CD4-positive, alpha-beta memory T cell (primary cell): ENCODE measurements at regions of chr3 and their contacts with region 1.

Region 1: GRCh38 chr3:184298759-184299496 is at the start of gene PSMD2:
- DNase-seq: peak; percentile 96 to 97 (median 96)
- H3K4me3 ChIP-seq: peak within 1 kb of the TSS; percentile 68 to 85
- H3K4me3 Mint-ChIP-seq: peak within 1 kb of the TSS; percentile 88 to 96 (median 94)
- H3K27ac ChIP-seq: peak within 1 kb of the TSS; percentile 73
- H3K27ac Mint-ChIP-seq: peak within 1 kb of the TSS; percentile 90 to 95 (median 94)
- H3K4me1 ChIP-seq: peaks cover 14% of the 10 kb centered on the region
- H3K4me1 Mint-ChIP-seq: peaks cover 14 to 35% (median 21%) of the 10 kb centered on the region in 4 donors
- H3K27me3 ChIP-seq: no peaks in the 10 kb centered on the region
- H3K27me3 Mint-ChIP-seq: no peaks in the 10 kb centered on the region
- total RNA-seq, gene PSMD2: 148 to 154 TPM

Region 2: DNA sequence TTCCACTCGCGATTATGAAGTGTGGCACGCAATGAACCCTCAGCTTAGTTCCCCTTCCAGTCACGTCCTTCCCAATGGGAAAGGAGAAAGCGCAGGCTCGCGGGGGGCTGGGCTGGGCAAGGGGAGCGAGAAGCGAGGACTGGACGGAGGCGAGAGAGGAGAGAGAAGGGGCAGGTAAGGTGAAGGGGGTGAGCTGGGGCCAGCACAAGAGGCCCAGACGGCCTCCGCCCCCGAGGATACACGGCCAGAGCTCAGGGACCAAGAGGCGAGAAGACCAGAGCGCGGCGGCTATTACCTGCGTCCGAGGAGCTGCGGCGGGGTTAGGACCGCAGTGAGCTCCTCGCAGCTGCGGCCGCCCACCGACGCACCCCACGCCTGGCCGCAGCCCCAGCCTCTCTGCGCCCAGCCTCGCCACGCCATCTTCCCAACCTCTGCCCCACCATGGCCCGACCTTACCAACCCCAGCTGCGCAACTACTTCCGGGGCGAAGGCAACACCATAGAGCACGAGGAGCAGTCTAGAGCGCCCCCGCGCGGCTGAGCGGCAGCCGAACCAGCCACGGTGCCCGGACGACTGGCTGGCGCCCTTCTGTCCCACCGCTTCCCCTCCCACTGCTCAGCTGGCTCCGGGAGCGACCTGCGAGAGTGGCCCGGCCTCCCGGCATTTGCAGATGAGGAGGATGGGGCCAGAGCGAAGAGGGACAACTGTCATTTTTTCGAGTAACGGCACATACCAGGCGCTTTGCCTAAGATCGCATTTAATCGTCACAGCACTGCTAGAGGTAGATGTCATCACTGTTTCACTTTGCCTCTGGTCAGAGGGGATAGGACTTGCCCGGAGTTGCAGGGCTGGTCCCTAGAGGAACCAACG is 414.3 kb before region 1 on chr3 and contains the start of gene PARL:
- CTCF ChIA-PET with region 1: no interaction called
- POLR2A ChIA-PET with region 1: no interaction called
- intact Hi-C with region 1: loop called (anchors 5 kb)
- DNase-seq: peak; percentile 93 to 95 (median 94)
- H3K4me3 ChIP-seq: peak within 1 kb of the TSS; percentile 85 to 95
- H3K4me3 Mint-ChIP-seq: peak within 1 kb of the TSS; percentile 92 to 98 (median 95)
- H3K27ac ChIP-seq: peak within 1 kb of the TSS; percentile 74
- H3K27ac Mint-ChIP-seq: peak within 1 kb of the TSS; percentile 88 to 96 (median 93)
- H3K4me1 ChIP-seq: peaks cover 28% of the 10 kb centered on the region
- H3K4me1 Mint-ChIP-seq: peaks cover 24 to 50% (median 34%) of the 10 kb centered on the region in 4 donors
- H3K27me3 ChIP-seq: no peaks in the 10 kb centered on the region
- H3K27me3 Mint-ChIP-seq: no peaks in the 10 kb centered on the region
- total RNA-seq, gene PARL: 46.9 to 50.2 TPM

Region 3: DNA sequence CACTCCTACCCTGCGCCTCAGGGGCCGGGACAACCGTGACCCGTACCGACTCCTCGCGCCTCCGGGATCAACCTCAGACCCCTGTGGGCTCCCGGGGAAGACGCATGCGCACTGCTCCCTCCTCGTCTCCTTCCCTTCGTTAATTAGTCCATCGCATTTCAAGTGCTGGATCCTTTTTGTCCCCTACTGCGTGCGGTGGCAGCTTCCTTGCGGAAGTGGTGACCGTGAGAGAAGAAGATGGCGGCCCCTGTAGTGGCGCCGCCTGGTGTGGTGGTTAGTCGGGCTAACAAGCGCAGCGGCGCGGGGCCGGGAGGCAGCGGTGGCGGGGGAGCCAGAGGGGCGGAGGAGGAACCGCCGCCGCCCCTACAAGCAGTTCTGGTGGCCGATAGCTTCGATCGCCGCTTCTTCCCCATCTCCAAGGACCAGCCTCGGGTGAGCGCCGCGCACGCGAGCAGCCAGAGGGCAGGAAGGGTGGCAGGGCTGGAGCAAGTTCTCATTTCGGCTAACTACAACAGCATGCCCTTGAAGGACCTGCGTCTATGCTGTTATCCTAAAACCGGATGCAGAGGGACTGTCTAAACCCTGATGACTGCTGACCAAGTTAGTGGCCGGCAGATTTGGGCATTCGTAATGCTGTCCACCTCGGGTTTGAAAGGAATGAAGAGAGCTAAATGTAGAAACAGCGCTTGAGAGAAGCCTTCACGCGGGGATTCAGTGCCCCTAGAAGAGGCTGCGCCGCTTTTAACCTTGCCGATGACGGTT is 163.6 kb before region 1 on chr3 and contains the start of gene EIF2B5:
- CTCF ChIA-PET with region 1: no interaction called
- POLR2A ChIA-PET with region 1: no interaction called
- intact Hi-C with region 1: loop called (anchors 1 kb)
- DNase-seq: peak; percentile 85 to 90 (median 86)
- H3K4me3 ChIP-seq: peak within 1 kb of the TSS; percentile 95 to 96
- H3K4me3 Mint-ChIP-seq: peak within 1 kb of the TSS; percentile 95 to 99 (median 98)
- H3K27ac ChIP-seq: peak within 1 kb of the TSS; percentile 78
- H3K27ac Mint-ChIP-seq: peak within 1 kb of the TSS; percentile 90 to 98 (median 97)
- H3K4me1 ChIP-seq: peaks cover 28% of the 10 kb centered on the region
- H3K4me1 Mint-ChIP-seq: peaks cover 23 to 49% (median 33%) of the 10 kb centered on the region in 4 donors
- H3K27me3 ChIP-seq: no peaks in the 10 kb centered on the region
- H3K27me3 Mint-ChIP-seq: no peaks in the 10 kb centered on the region
- total RNA-seq, gene EIF2B5: 82.3 to 87.6 TPM

Region 4: DNA sequence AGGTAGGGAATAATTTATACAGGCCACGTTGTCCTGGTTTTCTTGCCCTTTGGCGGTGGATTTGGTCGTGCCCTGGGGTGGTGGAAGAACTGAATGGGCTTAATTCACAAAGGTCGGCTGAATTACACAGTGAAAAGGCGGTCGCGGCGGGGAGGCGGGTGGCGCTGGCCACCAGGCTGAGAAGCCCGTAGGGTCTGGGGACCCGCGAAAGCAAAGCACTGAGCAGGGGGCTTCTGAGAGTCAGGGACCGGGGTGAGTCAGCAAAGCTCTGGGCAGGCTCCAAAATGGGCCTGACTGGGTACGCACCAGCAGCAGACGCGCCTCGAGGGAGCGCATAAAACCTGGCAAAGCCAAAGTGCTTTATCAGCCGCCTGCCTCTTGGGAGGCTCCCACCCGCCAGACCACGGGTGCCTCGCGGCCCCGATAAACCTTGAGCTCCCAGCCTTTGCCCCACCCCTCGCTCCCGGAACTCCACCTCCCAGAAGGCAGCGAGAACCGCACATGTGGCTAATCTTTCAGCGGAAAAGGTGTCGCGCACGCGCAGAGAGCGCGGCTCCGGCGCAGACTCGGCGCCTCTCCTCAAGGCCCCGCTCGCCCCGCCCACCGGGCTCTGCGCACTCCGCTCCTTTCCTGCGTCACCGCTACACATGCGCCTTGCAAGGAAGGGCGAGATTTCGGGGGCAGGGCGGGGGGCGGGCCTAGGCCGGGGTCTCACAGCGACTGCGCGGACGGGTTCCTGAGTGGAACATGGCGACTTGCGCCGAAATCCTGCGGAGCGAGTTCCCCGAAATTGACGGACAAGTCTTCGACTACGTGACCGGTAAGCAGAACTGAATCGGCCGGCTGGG is 113.2 kb before region 1 on chr3 and contains the start of gene ABCF3:
- CTCF ChIA-PET with region 1: no interaction called
- POLR2A ChIA-PET with region 1: interaction called, 4 read pairs
- intact Hi-C with region 1: loop called (anchors 1 kb)
- DNase-seq: peak; percentile 98 to 100 (median 99)
- H3K4me3 ChIP-seq: peak within 1 kb of the TSS; percentile 87 to 98
- H3K4me3 Mint-ChIP-seq: peak within 1 kb of the TSS; percentile 98 to 99 (median 98)
- H3K27ac ChIP-seq: peak within 1 kb of the TSS; percentile 80
- H3K27ac Mint-ChIP-seq: peak within 1 kb of the TSS; percentile 92 to 99 (median 97)
- H3K4me1 ChIP-seq: peaks cover 30% of the 10 kb centered on the region
- H3K4me1 Mint-ChIP-seq: peaks cover 26 to 47% (median 36%) of the 10 kb centered on the region in 4 donors
- H3K27me3 ChIP-seq: no peaks in the 10 kb centered on the region
- H3K27me3 Mint-ChIP-seq: no peaks in the 10 kb centered on the region
- total RNA-seq, gene ABCF3: 122 to 124 TPM

Region 5: DNA sequence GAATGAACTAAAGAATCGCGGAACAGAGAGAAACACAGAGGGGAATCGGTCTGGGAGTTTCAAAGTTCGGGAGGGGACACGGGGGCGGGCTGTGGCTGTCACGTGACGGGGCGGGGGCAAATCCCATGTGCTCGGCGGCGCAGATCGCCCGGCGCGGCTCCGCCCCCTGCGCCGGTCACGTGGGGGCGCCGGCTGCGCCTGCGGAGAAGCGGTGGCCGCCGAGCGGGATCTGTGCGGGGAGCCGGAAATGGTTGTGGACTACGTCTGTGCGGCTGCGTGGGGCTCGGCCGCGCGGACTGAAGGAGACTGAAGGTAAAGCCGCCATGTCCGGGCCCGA is 15.4 kb after region 1 on chr3 and contains the start of gene EIF4G1:
- CTCF ChIA-PET with region 1: interaction called, 3 read pairs
- POLR2A ChIA-PET with region 1: interaction called, 13 read pairs
- intact Hi-C with region 1: loop called (anchors 1 kb)
- DNase-seq: peak; percentile 91 to 93 (median 93)
- H3K4me3 ChIP-seq: peak within 1 kb of the TSS; percentile 65 to 67
- H3K4me3 Mint-ChIP-seq: peak within 1 kb of the TSS; percentile 80 to 93 (median 90)
- H3K27ac ChIP-seq: peak within 1 kb of the TSS; percentile 92
- H3K27ac Mint-ChIP-seq: peak within 1 kb of the TSS; percentile 93 to 97 (median 96)
- H3K4me1 ChIP-seq: peaks cover 37% of the 10 kb centered on the region
- H3K4me1 Mint-ChIP-seq: peaks cover 25 to 42% (median 28%) of the 10 kb centered on the region in 4 donors
- H3K27me3 ChIP-seq: no peaks in the 10 kb centered on the region
- H3K27me3 Mint-ChIP-seq: no peaks in the 10 kb centered on the region
- total RNA-seq, gene EIF4G1: 236 to 246 TPM

Region 6: DNA sequence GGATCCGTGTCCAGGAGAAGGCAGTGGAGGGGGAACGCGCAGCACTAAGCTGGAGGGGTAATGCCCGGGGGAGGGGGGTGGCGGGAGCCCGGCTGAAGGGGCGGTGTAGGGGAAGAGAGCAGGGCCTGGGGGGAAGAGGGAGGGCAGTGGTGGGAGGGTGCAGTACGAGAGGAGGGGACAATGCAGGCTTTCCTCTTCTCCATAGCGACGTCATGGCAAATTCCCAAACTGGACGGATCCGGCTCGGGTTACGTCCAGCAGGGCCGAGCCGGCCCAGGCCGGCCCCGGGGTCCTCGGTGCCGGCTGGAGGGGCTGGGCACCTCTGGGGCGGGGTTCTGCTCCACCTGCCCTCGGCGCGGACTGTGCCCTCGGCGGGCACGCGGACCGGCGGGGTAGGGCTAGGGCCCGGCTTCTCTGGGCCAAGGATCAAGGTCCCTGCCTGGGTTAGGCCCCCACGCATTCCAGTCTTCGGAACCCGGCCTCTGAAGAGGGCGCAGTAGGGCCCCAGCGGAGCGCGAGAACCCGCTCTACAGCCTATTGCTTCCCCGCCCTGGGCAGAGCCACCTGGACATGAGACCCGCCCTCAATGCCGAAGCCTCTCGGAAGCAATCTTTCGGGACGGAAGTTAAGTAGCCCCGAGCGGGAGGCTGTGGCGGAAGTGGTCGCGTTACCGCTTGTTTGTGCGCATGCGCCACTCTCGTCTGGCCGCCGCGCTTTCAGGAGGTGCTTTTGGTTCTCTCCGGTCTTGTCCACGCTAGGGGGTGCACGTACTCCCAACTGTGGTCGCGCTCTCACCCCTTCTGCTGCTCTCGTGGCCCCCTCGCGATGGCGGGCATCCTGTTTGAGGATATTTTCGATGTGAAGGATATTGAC is 64.0 kb after region 1 on chr3:
- CTCF ChIA-PET with region 1: no interaction called
- POLR2A ChIA-PET with region 1: no interaction called
- intact Hi-C with region 1: loop called (anchors 1 kb)
- DNase-seq: peak; percentile 91 to 94 (median 92)
- H3K4me3 ChIP-seq: peak overlapping the region; percentile 81 to 92
- H3K4me3 Mint-ChIP-seq: peak overlapping the region; percentile 97 to 100 (median 99)
- H3K27ac ChIP-seq: peak overlapping the region; percentile 75
- H3K27ac Mint-ChIP-seq: peak overlapping the region; percentile 97 to 99 (median 98)
- H3K4me1 ChIP-seq: peaks cover 22% of the 10 kb centered on the region
- H3K4me1 Mint-ChIP-seq: peaks cover 16 to 42% (median 29%) of the 10 kb centered on the region in 4 donors
- H3K27me3 ChIP-seq: no peaks in the 10 kb centered on the region
- H3K27me3 Mint-ChIP-seq: no peaks in the 10 kb centered on the region

Region 7: GRCh38 chr3:184399410-184399809 is 100.5 kb after region 1 on chr3:
- CTCF ChIA-PET with region 1: no interaction called
- POLR2A ChIA-PET with region 1: no interaction called
- intact Hi-C with region 1: no loop called
- DNase-seq: no peak
- H3K4me3 ChIP-seq: no peak overlapping the region
- H3K4me3 Mint-ChIP-seq: no peak overlapping the region
- H3K27ac ChIP-seq: no peak overlapping the region
- H3K27ac Mint-ChIP-seq: no peak overlapping the region
- H3K4me1 ChIP-seq: no peaks in the 10 kb centered on the region
- H3K4me1 Mint-ChIP-seq: no peaks in the 10 kb centered on the region
- H3K27me3 ChIP-seq: no peaks in the 10 kb centered on the region
- H3K27me3 Mint-ChIP-seq: peaks cover 19 to 26% of the 10 kb centered on the region in 2 donors